ENCODE measurements at regions of chr7 and their contacts with region 1.

Region 1: GRCh38 chr7:23055582-23056178 is 41.8 kb upstream of the HYCC1 start:
- DNase-seq: no peak
- H3K4me3 ChIP-seq: no peak overlapping the region
- H3K27ac ChIP-seq: no peak overlapping the region
- H3K4me1 ChIP-seq: peaks cover 0 to 10% (median 7%) of the 10 kb centered on the region in 4 donors
- H3K27me3 ChIP-seq: no peaks in the 10 kb centered on the region
- CTCF ChIP-seq: peak; percentile 76 to 91 (median 88)
- EP300 ChIP-seq: no peak
- POLR2A ChIP-seq: no peak

Region 2: DNA sequence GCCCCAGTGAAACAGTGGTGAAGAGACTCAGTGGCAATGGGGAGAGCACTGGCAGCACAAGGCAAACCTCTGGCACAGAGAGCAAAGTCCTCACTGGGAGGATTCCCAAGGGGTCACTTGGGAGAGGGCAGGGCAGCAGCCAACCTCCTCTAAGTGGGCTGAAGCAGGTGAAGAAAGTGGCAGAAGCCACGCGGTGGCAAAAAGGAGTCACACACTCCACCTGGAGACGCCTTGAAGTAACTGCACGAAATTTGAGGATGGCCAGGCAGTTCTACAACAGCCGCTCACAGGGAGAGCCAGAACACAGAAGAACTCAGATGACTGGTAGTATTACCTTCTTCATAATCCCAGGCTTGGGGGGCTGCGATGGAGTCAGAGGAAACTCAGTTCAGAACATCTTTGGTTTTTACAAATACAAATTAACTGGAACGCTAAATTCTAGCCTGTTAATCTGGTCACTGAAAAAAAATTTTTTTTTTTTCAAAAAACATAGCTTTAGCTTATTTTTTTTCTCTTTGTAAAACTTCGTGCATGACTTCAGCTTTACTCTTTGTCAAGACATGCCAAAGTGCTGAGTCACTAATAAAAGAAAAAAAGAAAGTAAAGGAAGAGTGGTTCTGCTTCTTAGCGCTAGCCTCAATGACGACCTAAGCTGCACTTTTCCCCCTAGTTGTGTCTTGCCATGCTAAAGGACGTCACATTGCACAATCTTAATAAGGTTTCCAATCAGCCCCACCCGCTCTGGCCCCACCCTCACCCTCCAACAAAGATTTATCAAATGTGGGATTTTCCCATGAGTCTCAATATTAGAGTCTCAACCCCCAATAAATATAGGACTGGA is 329.1 kb before region 1 on chr7:
- intact Hi-C with region 1: loop called (anchors 10 kb)
- DNase-seq: no peak
- H3K4me3 ChIP-seq: peak overlapping the region; percentile 46 to 59 (median 50)
- H3K27ac ChIP-seq: peak overlapping the region; percentile 77 to 87 (median 84)
- H3K4me1 ChIP-seq: peaks cover 57 to 82% (median 77%) of the 10 kb centered on the region in 4 donors
- H3K27me3 ChIP-seq: no peaks in the 10 kb centered on the region
- CTCF ChIP-seq: peak; percentile 26 to 65 (median 33)
- EP300 ChIP-seq: no peak
- POLR2A ChIP-seq: no peak

Region 3: DNA sequence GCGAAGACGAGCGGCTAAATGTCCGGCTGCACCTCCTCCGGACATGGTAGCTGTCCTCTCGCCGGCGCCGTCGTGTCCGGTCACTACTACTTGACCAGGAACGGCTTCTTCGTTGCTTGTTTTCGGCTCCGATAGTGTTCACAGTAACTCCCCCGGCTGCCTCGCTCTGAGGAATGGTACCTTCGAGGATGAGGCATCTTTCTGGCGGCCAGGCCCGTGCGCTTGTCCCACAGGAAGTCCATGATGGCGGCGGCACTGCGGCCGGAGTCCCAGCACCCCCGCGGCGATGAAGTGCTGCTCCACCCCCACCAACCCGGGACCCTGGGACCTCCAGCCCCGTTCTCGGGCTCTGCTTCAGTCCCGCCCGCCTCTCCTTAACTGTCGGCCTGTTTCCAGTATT is 530.5 kb after region 1 on chr7:
- intact Hi-C with region 1: no loop called
- DNase-seq: no peak
- H3K4me3 ChIP-seq: no peak overlapping the region
- H3K27ac ChIP-seq: no peak overlapping the region
- H3K4me1 ChIP-seq: no peaks in the 10 kb centered on the region
- H3K27me3 ChIP-seq: no peaks in the 10 kb centered on the region
- CTCF ChIP-seq: no peak
- EP300 ChIP-seq: no peak
- POLR2A ChIP-seq: no peak

Measured in esophagus muscularis mucosa (tissue), 4 donors.